Mammary epithelial cell (primary cell): ENCODE measurements at regions of chr10 and their contacts with region 1.

Region 1: GRCh38 chr10:73625884-73626752 is 15.2 kb downstream of the MYOZ1 start:
- DNase-seq: peak; percentile 96
- H3K4me3 ChIP-seq: peak overlapping the region; percentile 93 to 95 (median 93)
- H3K27ac ChIP-seq: peak overlapping the region; percentile 89
- H3K4me1 ChIP-seq: peaks cover 6% of the 10 kb centered on the region
- H3K27me3 ChIP-seq: no peaks in the 10 kb centered on the region
- CTCF ChIP-seq: no peak

Region 2: GRCh38 chr10:73529089-73529832 is 96.9 kb before region 1 on chr10:
- CTCF ChIA-PET with region 1: no interaction called
- dilution Hi-C with region 1: no loop called
- in situ Hi-C with region 1: no loop called
- intact Hi-C with region 1: loop called (anchors 1 kb)
- DNase-seq: peak; percentile 53
- H3K4me3 ChIP-seq: no peak overlapping the region
- H3K27ac ChIP-seq: no peak overlapping the region
- H3K4me1 ChIP-seq: no peaks in the 10 kb centered on the region
- H3K27me3 ChIP-seq: no peaks in the 10 kb centered on the region
- CTCF ChIP-seq: peak; percentile 71 to 81

Region 3: DNA sequence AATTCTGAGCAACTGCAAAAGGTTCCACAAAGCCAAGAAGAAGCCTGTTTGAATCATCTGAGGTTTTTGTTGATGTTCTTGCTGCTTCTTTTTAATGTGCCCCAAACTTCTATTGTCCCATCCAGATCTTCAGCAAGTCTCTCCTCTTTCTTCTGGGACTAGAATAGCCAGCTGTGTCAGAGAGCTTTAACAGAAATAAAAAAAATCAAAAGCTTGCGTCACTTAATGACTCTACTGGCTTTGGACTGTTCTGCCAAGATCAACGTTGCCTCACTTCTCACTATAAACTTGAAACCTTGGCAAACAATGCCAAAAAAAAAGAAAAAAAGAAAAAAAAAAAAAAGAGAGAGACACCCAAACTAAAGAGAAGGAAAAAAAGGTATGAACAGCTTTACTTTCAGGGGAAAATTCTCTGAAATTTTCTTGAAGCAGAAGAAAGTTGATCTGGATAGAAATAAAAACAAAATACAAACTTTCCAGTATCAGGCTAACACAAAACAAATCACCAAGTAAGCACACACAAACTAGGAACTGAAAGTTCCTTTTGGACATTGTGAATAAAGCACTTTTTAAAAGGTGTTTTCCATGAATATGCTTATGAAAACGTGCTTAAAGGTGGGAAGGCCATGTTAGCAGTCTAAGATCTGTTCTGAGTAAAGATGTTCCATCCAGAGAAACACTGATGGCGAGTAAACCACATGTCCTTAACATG is 49.8 kb before region 1 on chr10:
- CTCF ChIA-PET with region 1: no interaction called
- dilution Hi-C with region 1: loop called (anchors 5 kb)
- in situ Hi-C with region 1: no loop called
- intact Hi-C with region 1: no loop called
- DNase-seq: peak; percentile 69
- H3K4me3 ChIP-seq: no peak overlapping the region
- H3K27ac ChIP-seq: no peak overlapping the region
- H3K4me1 ChIP-seq: peaks cover 3% of the 10 kb centered on the region
- H3K27me3 ChIP-seq: no peaks in the 10 kb centered on the region
- CTCF ChIP-seq: no peak

Region 4: GRCh38 chr10:73601486-73601921 is 24.6 kb before region 1 on chr10:
- CTCF ChIA-PET with region 1: no interaction called
- dilution Hi-C with region 1: no loop called
- in situ Hi-C with region 1: no loop called
- intact Hi-C with region 1: loop called (anchors 2 kb)
- DNase-seq: peak; percentile 88
- H3K4me3 ChIP-seq: no peak overlapping the region
- H3K27ac ChIP-seq: no peak overlapping the region
- H3K4me1 ChIP-seq: peaks cover 18% of the 10 kb centered on the region
- H3K27me3 ChIP-seq: no peaks in the 10 kb centered on the region
- CTCF ChIP-seq: no peak

Region 5: DNA sequence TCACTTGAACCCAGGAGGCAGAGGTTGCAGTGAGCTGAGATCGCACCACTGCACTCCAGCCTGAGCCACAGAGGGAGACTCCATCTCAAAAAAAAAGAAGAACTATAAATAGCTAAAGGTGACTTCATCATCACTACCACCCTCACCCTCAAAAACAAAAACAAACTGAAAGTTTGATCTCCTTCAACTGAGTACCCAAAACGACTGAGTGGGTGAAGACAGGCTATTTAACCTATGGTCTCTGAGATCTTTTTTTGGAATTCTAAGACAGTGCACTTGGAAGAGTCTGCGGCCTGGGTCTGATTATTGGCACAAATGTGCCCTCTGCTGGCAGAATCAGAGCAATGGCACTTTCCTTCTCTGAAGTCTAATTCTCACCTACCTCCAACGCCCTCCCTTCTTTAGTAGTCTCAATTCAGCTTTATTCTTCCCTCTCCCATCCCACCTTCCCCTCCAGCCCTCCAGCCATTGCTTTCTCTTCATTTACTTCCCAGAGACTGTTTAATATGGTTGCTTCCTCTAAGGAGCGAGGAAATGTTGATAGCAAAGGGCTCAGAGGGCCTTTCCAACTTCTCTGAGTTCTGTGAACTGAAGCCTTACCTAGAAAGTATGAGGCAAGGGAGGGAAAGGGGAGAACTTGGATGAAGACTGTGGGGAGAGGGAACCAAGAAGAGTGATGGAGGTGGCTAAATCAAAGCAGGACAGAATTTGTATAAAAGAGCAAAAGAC is 18.1 kb after region 1 on chr10:
- CTCF ChIA-PET with region 1: no interaction called
- dilution Hi-C with region 1: no loop called
- in situ Hi-C with region 1: no loop called
- intact Hi-C with region 1: no loop called
- DNase-seq: peak; percentile 31
- H3K4me3 ChIP-seq: no peak overlapping the region
- H3K27ac ChIP-seq: no peak overlapping the region
- H3K4me1 ChIP-seq: peaks cover 8% of the 10 kb centered on the region
- H3K27me3 ChIP-seq: no peaks in the 10 kb centered on the region
- CTCF ChIP-seq: peak; percentile 84 to 87